PC-3 (cell line): ENCODE measurements at regions of chr7 and their contacts with region 1.

Region 1: GRCh38 chr7:90595801-90596671 is at the start of gene CDK14:
- DNase-seq: peak; percentile 59
- ATAC-seq: peak; percentile 42
- H3K4me3 ChIP-seq: peak within 1 kb of the TSS; percentile 90
- H3K27ac ChIP-seq: peak within 1 kb of the TSS; percentile 89
- H3K4me1 ChIP-seq: peaks cover 32% of the 10 kb centered on the region
- H3K27me3 ChIP-seq: no peaks in the 10 kb centered on the region
- CTCF ChIP-seq: peak; percentile 26; the same call in 1 of the 2 replicates
- total RNA-seq, gene CDK14: 6.6 and 8.2 TPM in 2 replicates

Region 2: GRCh38 chr7:90383422-90383821 is 212.6 kb before region 1 on chr7:
- CTCF ChIA-PET with region 1: no interaction called
- POLR2A ChIA-PET with region 1: interaction called, 20 read pairs
- intact Hi-C with region 1: no loop called
- DNase-seq: peak; percentile 79
- ATAC-seq: peak; percentile 63
- H3K4me3 ChIP-seq: peak overlapping the region; percentile 36; the same call in 1 of the 2 replicates
- H3K27ac ChIP-seq: peak overlapping the region; percentile 83
- H3K4me1 ChIP-seq: peaks cover 52% of the 10 kb centered on the region
- H3K27me3 ChIP-seq: no peaks in the 10 kb centered on the region
- CTCF ChIP-seq: no peak

Region 3: GRCh38 chr7:90552521-90552920 is 43.5 kb before region 1 on chr7:
- CTCF ChIA-PET with region 1: no interaction called
- POLR2A ChIA-PET with region 1: no interaction called
- intact Hi-C with region 1: loop called (anchors 5 kb)
- DNase-seq: peak; percentile 61
- ATAC-seq: peak; percentile 79
- H3K4me3 ChIP-seq: no peak overlapping the region
- H3K27ac ChIP-seq: no peak overlapping the region
- H3K4me1 ChIP-seq: peaks cover 6% of the 10 kb centered on the region; the same call in 1 of the 2 replicates
- H3K27me3 ChIP-seq: no peaks in the 10 kb centered on the region
- CTCF ChIP-seq: peak; percentile 53; the same call in 1 of the 2 replicates

Region 4: DNA sequence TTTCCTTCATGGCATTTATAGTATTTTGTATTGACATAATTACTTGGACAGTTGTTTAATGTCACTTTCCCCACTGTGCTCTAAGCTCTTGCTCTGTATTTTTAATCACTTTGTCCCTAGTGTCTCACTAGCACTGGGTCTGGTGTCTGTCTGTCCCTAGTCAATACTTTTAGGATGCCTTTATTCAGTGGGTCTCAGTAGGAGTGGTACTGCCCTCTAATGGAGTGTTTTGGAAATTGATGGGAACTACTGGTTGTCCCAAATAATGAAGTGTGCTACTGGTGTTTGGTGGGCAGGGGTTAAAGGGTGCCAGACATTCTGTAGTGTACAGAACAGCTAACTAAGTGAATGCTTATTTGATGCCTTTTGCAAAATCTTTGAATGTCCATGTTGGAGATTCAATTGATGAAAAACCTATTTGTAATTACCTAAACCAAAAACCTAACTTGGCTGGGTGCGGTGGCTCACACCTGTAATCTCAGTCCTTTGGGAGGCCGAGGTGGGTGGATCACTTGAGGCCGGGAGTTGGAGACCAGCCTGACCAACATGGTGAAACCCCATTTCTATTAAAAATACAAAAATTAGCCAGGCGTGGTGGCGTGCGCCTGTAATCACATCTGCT is 33.4 kb after region 1 on chr7:
- CTCF ChIA-PET with region 1: interaction called, 4 read pairs
- POLR2A ChIA-PET with region 1: interaction called, 4 read pairs
- intact Hi-C with region 1: loop called (anchors 1 kb)
- DNase-seq: peak; percentile 80
- ATAC-seq: peak; percentile 84
- H3K4me3 ChIP-seq: no peak overlapping the region
- H3K27ac ChIP-seq: no peak overlapping the region
- H3K4me1 ChIP-seq: peaks cover 19% of the 10 kb centered on the region
- H3K27me3 ChIP-seq: no peaks in the 10 kb centered on the region
- CTCF ChIP-seq: peak; percentile 80

Region 5: GRCh38 chr7:90690159-90690858 is 94.3 kb after region 1 on chr7:
- CTCF ChIA-PET with region 1: no interaction called
- POLR2A ChIA-PET with region 1: no interaction called
- intact Hi-C with region 1: no loop called
- DNase-seq: no peak
- ATAC-seq: no peak
- H3K4me3 ChIP-seq: no peak overlapping the region
- H3K27ac ChIP-seq: no peak overlapping the region
- H3K4me1 ChIP-seq: peaks cover 12% of the 10 kb centered on the region
- H3K27me3 ChIP-seq: no peaks in the 10 kb centered on the region
- CTCF ChIP-seq: no peak

Region 6: DNA sequence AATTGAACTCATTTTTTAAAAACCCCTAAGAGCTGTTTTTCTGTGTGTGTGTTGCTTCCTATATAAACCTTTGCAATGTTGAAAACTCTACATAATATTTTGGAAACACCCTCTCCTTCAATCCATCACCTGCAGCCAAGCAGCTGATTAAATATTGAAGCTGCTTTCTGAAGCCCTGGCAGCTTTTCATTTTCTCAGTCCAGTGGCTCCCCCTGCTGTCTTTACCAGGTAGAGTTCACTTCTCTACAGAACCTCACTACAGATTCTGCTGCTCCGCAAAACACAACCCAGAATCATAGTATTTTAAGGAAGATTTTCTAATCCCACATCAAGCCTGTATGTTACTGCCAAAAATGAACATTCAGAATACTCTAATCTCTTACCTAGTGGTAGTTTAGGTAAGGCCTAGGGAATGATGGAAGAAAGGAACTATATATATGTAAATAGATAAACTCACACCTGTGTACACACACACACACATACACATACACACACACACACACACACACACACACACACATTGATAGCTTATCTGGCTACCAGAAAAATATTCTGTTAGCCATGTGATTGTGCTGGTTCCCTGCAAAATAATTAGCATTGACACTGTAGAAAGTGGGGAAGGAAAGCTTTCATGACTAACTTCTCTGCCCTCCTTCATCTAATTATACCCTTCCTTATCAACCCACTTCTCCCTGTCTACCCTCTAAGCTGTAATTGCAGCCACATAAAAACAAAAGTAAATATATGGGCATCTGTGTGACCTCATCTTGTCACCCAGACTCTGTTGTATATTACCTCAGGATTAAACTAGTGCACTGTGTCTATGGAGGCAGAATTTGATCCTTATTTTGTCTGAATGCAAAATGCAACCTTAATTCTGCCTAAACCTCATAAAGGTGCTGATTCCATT is 438.7 kb after region 1 on chr7:
- CTCF ChIA-PET with region 1: no interaction called
- POLR2A ChIA-PET with region 1: no interaction called
- intact Hi-C with region 1: loop called (anchors 1 kb)
- DNase-seq: peak; percentile 65
- ATAC-seq: peak; percentile 63
- H3K4me3 ChIP-seq: no peak overlapping the region
- H3K27ac ChIP-seq: no peak overlapping the region
- H3K4me1 ChIP-seq: no peaks in the 10 kb centered on the region
- H3K27me3 ChIP-seq: no peaks in the 10 kb centered on the region
- CTCF ChIP-seq: peak; percentile 81